ENCODE measurements at regions of chr6 and their contacts with region 1.

Region 1: GRCh38 chr6:165729307-165729936 is 66.4 kb upstream of the PDE10A start:
- DNase-seq: no peak

Region 2: GRCh38 chr6:165010556-165011535 is 718.6 kb before region 1 on chr6:
- intact Hi-C with region 1: no loop called
- DNase-seq: no peak

Region 3: DNA sequence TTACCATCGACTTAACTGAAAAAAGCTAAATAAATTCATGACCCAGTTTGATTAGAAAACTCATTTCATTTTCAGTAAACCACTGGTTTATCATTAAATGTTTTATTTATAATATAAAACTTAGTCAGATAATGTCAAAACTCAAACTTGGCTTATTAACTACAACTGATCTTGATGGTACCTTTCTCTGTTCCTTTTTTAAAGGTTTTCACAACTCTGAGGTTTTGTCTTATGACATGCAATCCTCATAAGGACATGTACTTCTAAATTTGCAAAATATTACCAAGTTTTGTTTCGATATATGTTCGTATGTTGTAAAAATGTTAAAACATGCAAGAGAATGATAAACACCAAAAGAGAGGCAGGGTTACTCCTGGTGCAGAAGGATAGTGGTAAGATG is 16.1 kb after region 1 on chr6:
- intact Hi-C with region 1: no loop called
- DNase-seq: no peak

Region 4: DNA sequence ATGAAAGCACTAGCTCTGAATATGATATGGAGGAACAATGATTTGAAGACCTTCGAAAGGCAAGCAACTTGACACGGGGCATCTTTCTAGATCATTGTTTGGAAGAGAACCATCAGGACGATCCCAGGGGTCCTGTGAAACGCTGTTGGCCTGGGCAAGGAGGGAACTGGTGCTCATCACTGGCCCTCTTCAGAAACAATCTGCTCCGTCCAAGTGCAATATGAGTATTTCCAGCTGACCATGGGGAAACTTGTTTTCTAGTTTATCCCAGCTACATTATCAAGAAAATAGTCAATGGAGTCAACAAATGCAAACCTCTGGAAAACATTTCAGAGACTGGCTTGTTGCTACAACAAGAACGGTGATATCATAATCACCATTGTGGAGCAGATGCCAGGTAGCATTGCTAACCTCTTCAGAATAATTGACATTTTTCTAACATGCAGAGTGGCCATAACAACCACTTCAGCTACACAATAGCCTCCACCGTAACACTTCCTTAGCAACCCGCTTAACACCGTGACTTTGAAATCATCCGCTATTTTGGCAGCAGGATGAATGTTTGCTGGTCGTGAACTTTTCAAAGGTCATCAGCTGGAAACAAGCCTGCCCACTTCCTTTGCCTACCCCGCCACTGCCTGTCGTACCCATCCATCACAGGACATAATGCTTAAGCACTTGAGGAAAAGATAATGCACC is 45.6 kb after region 1 on chr6:
- intact Hi-C with region 1: loop called (anchors 5 kb)
- DNase-seq: no peak

Region 5: DNA sequence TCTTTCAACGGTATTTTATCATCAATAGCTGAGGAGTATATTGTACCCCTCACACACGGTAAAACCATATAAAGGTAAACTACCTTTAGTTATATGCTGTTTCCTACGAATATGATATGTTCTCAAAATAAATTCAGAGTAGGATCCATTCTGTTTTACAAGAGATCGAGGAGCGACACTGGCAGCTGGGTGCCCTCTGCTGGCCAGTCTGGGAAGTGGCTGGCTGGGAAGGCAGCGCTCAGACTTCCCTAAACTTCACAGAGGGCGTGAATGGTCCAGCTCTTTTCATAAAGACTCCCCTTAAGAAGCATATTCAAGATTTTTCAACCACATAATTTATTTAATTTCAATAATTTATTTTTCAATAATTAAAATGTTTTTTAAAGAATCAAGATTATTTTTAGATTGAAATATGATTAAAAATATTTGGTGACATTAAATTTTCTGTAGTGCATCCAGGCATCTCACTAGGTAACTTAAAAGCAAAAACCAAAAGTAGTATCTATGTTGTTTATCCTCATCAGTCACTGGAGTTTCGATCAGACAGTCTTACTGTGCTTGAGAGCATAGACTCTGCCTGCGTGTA is 121.1 kb after region 1 on chr6:
- intact Hi-C with region 1: loop called (anchors 2 kb)
- DNase-seq: peak; percentile 86

Measured in cardiac septum (tissue), 1 donor.